ENCODE measurements at regions of chr12 and their contacts with region 1.

Region 1: GRCh38 chr12:66035288-66035966 is 95.1 kb downstream of the LLPH start:
- DNase-seq: no peak
- ATAC-seq: no peak
- H3K4me3 ChIP-seq: no peak overlapping the region
- H3K27ac ChIP-seq: peak overlapping the region in 4 of 10 donors; percentile 15 to 65 (median 52)
- H3K4me1 ChIP-seq: peaks cover 0 to 15% (median 4%) of the 10 kb centered on the region in 9 donors
- H3K27me3 ChIP-seq: no peaks in the 10 kb centered on the region
- CTCF ChIP-seq: peak in 6 of 9 donors; percentile 33 to 50 (median 40)

Region 2: DNA sequence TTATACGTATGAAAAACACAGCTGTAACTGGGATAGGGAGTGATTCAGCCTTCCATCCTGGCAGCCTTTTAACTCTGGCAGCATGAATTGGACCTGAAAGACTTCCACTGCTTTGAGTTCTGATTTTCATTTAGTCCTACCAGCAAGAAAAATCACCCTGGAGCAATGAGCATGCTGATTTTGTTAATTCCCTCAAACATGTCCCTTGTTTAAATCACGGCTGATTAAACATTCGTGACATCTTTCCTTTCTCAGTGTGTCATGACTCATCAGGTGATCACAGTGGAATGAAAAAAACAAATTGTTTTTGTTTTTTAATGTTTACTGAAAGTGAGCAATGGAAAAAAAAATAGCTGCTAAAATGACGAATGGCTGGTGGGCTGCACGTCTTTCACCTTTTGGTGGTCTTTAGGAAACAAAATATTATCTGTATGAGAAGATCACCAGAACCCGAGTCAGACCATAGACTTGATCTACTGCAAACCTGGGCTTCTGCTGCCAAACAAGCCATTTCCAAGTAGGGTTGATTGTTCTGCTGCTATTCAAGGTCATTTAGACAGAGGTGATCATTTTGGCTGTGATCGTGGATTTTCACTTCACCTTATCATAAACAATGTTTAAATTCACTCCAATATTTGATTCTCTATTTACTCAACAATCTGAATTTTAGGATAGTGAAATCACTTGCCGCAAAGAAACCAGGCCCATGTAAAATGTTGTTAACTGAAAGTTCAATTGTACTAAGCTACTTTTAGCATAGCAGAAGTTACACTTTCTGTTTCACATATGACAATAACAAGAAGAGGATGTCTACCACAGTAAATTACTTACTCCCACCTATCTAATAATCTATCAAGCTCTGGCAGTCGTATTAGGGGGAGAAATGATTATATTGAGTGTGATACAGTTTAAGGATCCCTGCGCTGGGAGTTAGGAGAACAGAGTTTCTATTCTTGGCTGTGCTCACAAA is 1166.9 kb after region 1 on chr12:
- intact Hi-C with region 1: loop called in 1 of 10 experiments (anchors 5 kb)
- DNase-seq: no peak
- ATAC-seq: no peak
- H3K4me3 ChIP-seq: no peak overlapping the region
- H3K27ac ChIP-seq: no peak overlapping the region
- H3K4me1 ChIP-seq: no peaks in the 10 kb centered on the region
- H3K27me3 ChIP-seq: no peaks in the 10 kb centered on the region
- CTCF ChIP-seq: no peak

Measured in heart right ventricle (tissue), 16 donors.